OCI-LY7 (cell line): ENCODE measurements at regions of chr22 and their contacts with region 1.

Region 1: GRCh38 chr22:23591201-23591791 is 11.2 kb upstream of the IGLL1 start:
- DNase-seq: peak; percentile 66
- H3K4me3 ChIP-seq: no peak overlapping the region
- H3K27ac ChIP-seq: no peak overlapping the region
- H3K4me1 ChIP-seq: no peaks in the 10 kb centered on the region
- CTCF ChIP-seq: peak; percentile 93

Region 2: DNA sequence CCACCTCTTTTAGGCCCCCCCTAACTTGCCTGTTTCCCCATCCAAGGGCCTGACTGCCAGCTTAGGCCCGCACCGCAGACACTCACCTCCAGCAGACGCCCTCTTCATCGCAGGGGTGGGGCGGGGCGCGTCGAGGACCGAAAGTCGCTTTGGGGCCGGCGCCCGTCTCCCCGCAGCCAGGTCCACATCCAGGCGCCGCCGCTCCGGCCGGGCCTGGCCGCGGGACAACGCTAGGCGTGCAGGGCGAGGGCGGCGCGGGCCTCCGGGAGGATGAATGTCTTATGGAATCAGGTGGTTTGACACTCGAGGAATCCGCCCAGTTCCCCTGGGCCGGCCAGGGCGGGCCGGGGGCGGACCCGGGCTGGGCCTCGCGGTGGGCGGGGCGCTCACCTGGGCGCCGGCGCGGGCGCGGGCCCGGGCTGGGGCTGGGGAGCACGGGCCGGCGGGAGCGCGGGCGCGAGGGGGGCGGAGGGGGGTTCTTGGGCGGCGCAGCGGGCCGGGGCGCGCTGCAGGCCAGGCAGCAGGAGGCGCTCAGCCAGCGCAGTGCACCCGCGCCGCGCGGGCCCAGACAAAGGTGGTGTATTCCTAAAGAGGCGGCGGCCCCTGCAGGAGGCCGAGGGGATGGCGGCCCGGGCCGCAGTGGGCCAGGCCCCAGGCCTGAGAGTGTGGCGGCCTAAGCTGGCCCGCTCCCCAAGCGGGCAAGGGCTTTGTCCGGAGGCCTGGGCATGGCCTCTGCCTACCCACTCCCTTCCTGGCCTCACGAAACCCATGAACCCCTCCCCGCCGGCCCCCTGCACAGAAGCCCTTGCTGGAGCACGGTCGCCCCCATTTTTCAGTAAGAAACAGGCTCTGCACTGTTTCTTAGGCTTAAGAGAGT is 188.8 kb before region 1 on chr22:
- CTCF ChIA-PET with region 1: no interaction called
- POLR2A ChIA-PET with region 1: no interaction called
- intact Hi-C with region 1: loop called (anchors 5 kb)
- DNase-seq: peak; percentile 86
- H3K4me3 ChIP-seq: peak overlapping the region; percentile 62
- H3K27ac ChIP-seq: no peak overlapping the region
- H3K4me1 ChIP-seq: peaks cover 6% of the 10 kb centered on the region
- CTCF ChIP-seq: peak; percentile 75